Activated B cell treated with CpG ODN at 0.5 μM for 24 hours (primary cell): ENCODE measurements at regions of chr11 and their contacts with region 1.

Region 1: GRCh38 chr11:75896843-75897419 is 81.9 kb downstream of the UVRAG start:
- DNase-seq: no peak
- ATAC-seq: no peak
- H3K4me3 Mint-ChIP-seq: no peak overlapping the region
- H3K27ac Mint-ChIP-seq: no peak overlapping the region
- H3K4me1 Mint-ChIP-seq: peaks cover 60% of the 10 kb centered on the region
- H3K27me3 Mint-ChIP-seq: no peaks in the 10 kb centered on the region
- CTCF ChIP-seq: no peak

Region 2: GRCh38 chr11:75802913-75803820 is 93.8 kb before region 1 on chr11:
- CTCF ChIA-PET with region 1: interaction called, 16 read pairs
- POLR2A ChIA-PET with region 1: no interaction called
- intact Hi-C with region 1: no loop called
- DNase-seq: peak; percentile 50
- ATAC-seq: peak; percentile 95
- H3K4me3 Mint-ChIP-seq: no peak overlapping the region
- H3K27ac Mint-ChIP-seq: no peak overlapping the region
- H3K4me1 Mint-ChIP-seq: peaks cover 15% of the 10 kb centered on the region
- H3K27me3 Mint-ChIP-seq: no peaks in the 10 kb centered on the region
- CTCF ChIP-seq: peak; percentile 17

Region 3: GRCh38 chr11:75867775-75868374 is 29.1 kb before region 1 on chr11:
- CTCF ChIA-PET with region 1: interaction called, 19 read pairs
- POLR2A ChIA-PET with region 1: interaction called, 16 read pairs
- intact Hi-C with region 1: loop called (anchors 1 kb)
- DNase-seq: no peak
- ATAC-seq: peak; percentile 74
- H3K4me3 Mint-ChIP-seq: no peak overlapping the region
- H3K27ac Mint-ChIP-seq: peak overlapping the region; percentile 22
- H3K4me1 Mint-ChIP-seq: peaks cover 58% of the 10 kb centered on the region
- H3K27me3 Mint-ChIP-seq: no peaks in the 10 kb centered on the region
- CTCF ChIP-seq: no peak

Region 4: GRCh38 chr11:75924966-75925784 is 28.2 kb after region 1 on chr11:
- CTCF ChIA-PET with region 1: no interaction called
- POLR2A ChIA-PET with region 1: interaction called, 12 read pairs
- intact Hi-C with region 1: no loop called
- DNase-seq: no peak
- ATAC-seq: no peak
- H3K4me3 Mint-ChIP-seq: no peak overlapping the region
- H3K27ac Mint-ChIP-seq: no peak overlapping the region
- H3K4me1 Mint-ChIP-seq: peaks cover 39% of the 10 kb centered on the region
- H3K27me3 Mint-ChIP-seq: no peaks in the 10 kb centered on the region
- CTCF ChIP-seq: no peak

Region 5: GRCh38 chr11:76235233-76236091 is 338.5 kb after region 1 on chr11:
- CTCF ChIA-PET with region 1: interaction called, 3 read pairs
- POLR2A ChIA-PET with region 1: no interaction called
- intact Hi-C with region 1: loop called (anchors 10 kb)
- DNase-seq: peak; percentile 82
- ATAC-seq: peak; percentile 78
- H3K4me3 Mint-ChIP-seq: peak overlapping the region; percentile 95
- H3K27ac Mint-ChIP-seq: peak overlapping the region; percentile 95
- H3K4me1 Mint-ChIP-seq: peaks cover 32% of the 10 kb centered on the region
- H3K27me3 Mint-ChIP-seq: peaks cover 7% of the 10 kb centered on the region
- CTCF ChIP-seq: no peak

Region 6: GRCh38 chr11:76419896-76420295 is 523.0 kb after region 1 on chr11:
- CTCF ChIA-PET with region 1: no interaction called
- POLR2A ChIA-PET with region 1: no interaction called
- intact Hi-C with region 1: no loop called
- DNase-seq: no peak
- ATAC-seq: no peak
- H3K4me3 Mint-ChIP-seq: no peak overlapping the region
- H3K27ac Mint-ChIP-seq: no peak overlapping the region
- H3K4me1 Mint-ChIP-seq: peaks cover 4% of the 10 kb centered on the region
- H3K27me3 Mint-ChIP-seq: no peaks in the 10 kb centered on the region
- CTCF ChIP-seq: no peak

Region 7: GRCh38 chr11:76444384-76445123 is 547.6 kb after region 1 on chr11 and contains the start of gene EMSY:
- CTCF ChIA-PET with region 1: no interaction called
- POLR2A ChIA-PET with region 1: no interaction called
- intact Hi-C with region 1: loop called (anchors 5 kb)
- DNase-seq: peak; percentile 78
- ATAC-seq: peak; percentile 95
- H3K4me3 Mint-ChIP-seq: peak within 1 kb of the TSS; percentile 95
- H3K27ac Mint-ChIP-seq: peak within 1 kb of the TSS; percentile 93
- H3K4me1 Mint-ChIP-seq: peaks cover 31% of the 10 kb centered on the region
- H3K27me3 Mint-ChIP-seq: no peaks in the 10 kb centered on the region
- CTCF ChIP-seq: no peak
- total RNA-seq, gene EMSY: 24.9 and 31.1 TPM in 2 replicates